ENCODE measurements at regions of chr12 and their contacts with region 1.

Region 1: DNA sequence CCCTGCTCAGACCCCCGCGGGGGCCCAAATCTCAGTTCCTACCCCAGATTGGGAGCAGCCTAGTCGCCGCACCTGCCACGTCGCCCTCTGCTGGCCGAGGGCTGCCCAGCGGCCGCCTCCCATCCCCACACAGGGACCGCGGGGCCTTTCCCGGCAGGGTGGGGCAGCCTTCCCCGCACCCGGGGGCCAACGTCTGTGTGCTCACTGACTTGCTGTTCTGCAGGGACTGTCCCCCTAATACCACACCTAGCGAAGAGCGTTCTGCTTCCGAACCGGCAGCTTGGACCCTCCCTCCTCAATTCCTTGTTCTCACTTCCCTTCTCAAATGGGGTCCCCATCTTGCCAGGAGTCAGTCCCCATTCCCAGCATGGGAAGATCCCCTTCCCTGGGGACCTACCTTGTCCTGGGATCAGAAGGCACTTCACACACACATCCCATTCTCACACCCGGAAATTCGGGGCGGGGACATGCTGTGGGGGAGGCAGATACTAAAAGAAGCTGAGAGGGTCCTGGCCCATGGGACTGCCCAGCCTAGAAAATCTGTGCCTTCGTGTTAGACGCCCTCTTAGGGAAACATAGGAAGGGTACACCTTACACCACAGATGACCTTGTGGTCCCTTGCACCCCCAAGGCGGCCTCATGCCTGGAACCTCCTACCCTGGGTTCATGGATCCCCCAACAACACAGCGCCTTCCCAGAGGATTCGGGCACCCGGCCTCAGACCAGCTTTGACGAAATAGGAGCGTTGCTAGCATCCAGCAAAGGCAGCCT is 16.4 kb downstream of the ACVRL1 start:
- DNase-seq: peak; percentile 20 to 45 (median 42)
- H3K4me3 ChIP-seq: peak overlapping the region in 3 of 7 experiments; percentile 26 to 58 (median 42)
- H3K27ac ChIP-seq: no peak overlapping the region
- H3K4me1 ChIP-seq: peaks cover 10 to 29% (median 29%) of the 10 kb centered on the region in 4 experiments
- H3K27me3 ChIP-seq: no peaks in the 10 kb centered on the region

Region 2: DNA sequence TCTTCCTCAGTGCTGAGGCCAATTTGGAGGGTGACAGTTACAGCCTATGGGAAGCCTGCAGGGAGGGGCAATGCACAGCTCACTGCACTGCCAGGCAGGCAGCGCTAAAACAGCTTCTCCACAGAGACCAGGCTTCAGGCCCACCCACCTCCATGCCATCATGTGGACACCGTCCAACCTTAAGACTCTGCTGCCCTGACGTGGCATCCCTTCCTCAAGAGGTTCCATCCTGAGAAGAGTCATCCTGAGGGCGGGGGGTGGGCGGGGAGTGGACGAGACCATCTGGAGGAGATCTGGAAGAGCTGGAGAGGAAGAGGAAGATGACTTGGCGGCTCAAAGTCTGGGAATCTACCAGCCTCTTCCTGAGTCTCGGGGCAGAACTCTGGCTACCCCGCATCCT is 24.7 kb before region 1 on chr12:
- CTCF ChIA-PET with region 1: interaction called, 77 read pairs
- POLR2A ChIA-PET with region 1: interaction called, 3 read pairs
- DNase-seq: no peak
- H3K4me3 ChIP-seq: no peak overlapping the region
- H3K27ac ChIP-seq: no peak overlapping the region
- H3K4me1 ChIP-seq: peaks cover 0 to 4% (median 0%) of the 10 kb centered on the region in 4 experiments
- H3K27me3 ChIP-seq: no peaks in the 10 kb centered on the region

Region 3: DNA sequence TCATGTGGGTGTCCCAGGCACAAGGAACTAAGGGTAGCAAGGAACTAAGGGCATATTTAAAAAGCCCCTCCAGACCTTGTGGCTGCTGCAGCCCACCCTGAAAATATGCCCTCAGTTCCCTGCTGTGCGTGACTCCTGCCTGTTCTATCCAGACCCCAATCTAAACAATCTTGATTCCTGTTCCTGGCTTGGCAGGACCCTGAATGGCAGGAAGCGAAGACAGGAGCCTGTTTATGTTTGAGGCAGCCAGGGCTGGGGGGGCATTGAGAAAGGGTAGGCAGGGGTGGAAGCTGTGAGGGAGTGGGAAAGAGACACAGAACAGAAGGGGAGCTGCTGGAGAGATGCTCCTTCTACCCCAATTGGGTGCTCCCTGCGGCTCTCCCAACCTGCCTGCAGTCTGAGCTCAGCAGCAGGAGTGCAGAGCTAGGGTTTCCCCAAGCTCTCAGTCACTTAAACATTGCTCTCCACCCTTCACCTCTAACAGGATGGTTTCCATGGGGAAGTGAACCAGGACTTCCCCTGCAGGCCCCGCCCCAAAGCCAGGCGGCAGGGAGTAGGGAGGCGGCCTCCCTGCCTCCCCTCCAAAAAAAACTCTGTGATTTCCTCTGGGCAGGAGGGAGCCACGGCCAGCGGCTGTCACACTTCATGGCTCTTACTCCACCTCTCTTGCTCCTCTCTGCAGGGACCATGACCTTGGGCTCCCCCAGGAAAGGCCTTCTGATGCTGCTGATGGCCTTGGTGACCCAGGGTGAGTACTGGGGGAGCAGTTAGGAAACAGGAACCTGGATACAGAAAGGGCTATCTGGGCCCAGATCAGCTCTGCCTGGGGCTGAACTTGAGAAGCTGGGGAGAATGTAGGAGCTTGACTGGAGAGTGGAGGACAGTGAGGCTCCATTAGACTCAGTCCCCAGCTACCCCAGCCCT is 11.6 kb before region 1 on chr12:
- CTCF ChIA-PET with region 1: interaction called, 63 read pairs
- POLR2A ChIA-PET with region 1: no interaction called
- DNase-seq: no peak
- H3K4me3 ChIP-seq: no peak overlapping the region
- H3K27ac ChIP-seq: no peak overlapping the region
- H3K4me1 ChIP-seq: peaks cover 6 to 31% (median 25%) of the 10 kb centered on the region in 4 experiments
- H3K27me3 ChIP-seq: peaks cover 0 to 22% (median 6%) of the 10 kb centered on the region in 5 experiments

Region 4: DNA sequence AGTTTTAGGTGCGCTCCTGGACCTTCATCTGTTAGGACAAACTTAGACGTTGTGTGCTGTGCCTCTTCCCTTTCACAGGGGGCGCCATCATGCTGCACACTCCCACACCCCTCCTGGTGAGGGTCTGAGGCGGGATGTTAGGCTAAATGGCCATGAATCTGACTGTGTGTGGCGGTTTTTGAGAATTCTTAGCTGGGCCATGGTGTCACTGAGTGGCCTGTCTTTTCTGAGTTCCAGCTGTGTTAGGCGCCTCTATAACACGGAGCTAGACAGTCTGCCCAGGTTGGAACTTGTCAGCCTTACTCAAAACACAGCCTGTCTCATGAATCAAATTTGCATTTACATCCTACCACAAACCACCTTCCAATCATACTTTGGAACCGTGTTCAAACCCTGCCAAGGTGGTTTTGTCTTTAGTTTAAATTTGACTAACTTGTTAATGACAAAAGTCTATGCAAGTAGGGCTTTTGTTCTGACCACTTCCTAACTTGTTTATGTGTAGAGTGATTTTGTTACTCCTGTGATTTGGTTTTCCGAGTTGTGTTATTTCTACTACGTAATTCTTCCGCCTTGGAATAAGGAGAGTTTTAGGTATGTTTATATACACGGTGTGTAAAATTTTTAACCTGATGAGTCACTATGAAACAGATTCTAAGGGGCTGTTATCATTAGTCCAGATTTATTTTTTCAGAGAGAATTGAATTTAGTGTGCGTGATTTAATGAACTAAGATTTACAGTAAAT is 47.4 kb after region 1 on chr12:
- CTCF ChIA-PET with region 1: interaction called, 13 read pairs
- POLR2A ChIA-PET with region 1: no interaction called
- DNase-seq: peak in 2 of 3 donors; percentile 41 to 47
- H3K4me3 ChIP-seq: peak overlapping the region in 2 of 7 experiments; percentile 4 to 26
- H3K27ac ChIP-seq: no peak overlapping the region
- H3K4me1 ChIP-seq: peaks cover 49 to 62% (median 54%) of the 10 kb centered on the region in 4 experiments
- H3K27me3 ChIP-seq: no peaks in the 10 kb centered on the region

Region 5: DNA sequence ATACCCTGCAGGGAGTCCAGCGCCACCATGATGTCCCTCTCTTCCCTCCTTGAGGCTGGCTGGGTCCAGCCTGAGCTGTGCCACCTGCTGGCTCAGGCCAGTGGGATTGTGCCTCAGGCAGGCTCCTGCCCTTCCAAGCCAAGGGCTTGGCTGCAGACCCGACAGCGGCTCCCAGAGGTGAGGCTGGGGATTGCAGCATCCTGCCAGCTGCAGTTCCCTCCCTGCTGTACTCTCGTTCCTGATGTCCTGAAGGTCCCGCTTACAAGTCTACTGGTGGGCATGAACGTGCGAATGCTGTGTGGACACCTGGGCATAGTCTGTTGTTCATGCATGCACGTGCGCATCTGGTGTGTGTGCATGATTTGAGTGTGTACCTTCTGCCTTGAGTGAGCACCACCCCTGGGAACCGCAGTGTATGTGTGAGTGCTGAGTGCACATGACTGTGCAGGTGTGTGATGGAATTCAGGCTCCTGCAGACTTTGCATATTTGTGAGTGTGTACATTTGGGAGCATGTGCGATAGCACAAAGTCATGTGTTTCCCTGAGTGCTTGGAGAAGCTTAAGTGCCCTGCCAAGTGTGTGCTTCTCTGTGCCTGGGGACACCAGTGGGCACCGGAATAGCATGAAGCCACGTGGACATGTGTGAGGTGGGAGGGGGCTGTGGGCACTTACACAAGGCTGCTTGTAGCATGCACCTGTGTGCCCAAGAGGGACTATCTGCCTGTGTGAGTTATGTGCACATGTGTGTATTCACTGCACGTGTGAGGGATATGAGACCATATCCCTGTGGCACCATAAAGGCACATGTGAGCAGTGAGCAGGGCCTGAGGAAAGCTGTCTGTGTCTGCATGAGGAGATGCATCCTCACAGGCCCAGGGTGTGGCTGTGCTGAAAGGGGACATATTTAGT is 290.1 kb after region 1 on chr12:
- CTCF ChIA-PET with region 1: no interaction called
- POLR2A ChIA-PET with region 1: no interaction called
- DNase-seq: peak; percentile 61 to 78 (median 67)
- H3K4me3 ChIP-seq: no peak overlapping the region
- H3K27ac ChIP-seq: no peak overlapping the region
- H3K4me1 ChIP-seq: no peaks in the 10 kb centered on the region
- H3K27me3 ChIP-seq: peaks cover 0 to 7% (median 0%) of the 10 kb centered on the region in 5 experiments